Spleen (tissue), 13 donors: ENCODE measurements at regions of chr16 and their contacts with region 1.

Region 1: GRCh38 chr16:75653922-75654321 is 6.3 kb downstream of the TERF2IP start:
- DNase-seq: no peak
- H3K4me3 ChIP-seq: no peak overlapping the region
- H3K27ac ChIP-seq: no peak overlapping the region
- H3K4me1 ChIP-seq: peaks cover 34 to 67% (median 49%) of the 10 kb centered on the region in 6 donors
- H3K27me3 ChIP-seq: no peaks in the 10 kb centered on the region
- CTCF ChIP-seq: no peak
- POLR2A ChIP-seq: no peak

Region 2: GRCh38 chr16:75599452-75600277 is 54.3 kb before region 1 on chr16:
- intact Hi-C with region 1: no loop called
- DNase-seq: no peak
- H3K4me3 ChIP-seq: no peak overlapping the region
- H3K27ac ChIP-seq: no peak overlapping the region
- H3K4me1 ChIP-seq: peaks cover 0 to 5% (median 2%) of the 10 kb centered on the region in 6 donors
- H3K27me3 ChIP-seq: no peaks in the 10 kb centered on the region
- CTCF ChIP-seq: no peak
- POLR2A ChIP-seq: no peak

Region 3: DNA sequence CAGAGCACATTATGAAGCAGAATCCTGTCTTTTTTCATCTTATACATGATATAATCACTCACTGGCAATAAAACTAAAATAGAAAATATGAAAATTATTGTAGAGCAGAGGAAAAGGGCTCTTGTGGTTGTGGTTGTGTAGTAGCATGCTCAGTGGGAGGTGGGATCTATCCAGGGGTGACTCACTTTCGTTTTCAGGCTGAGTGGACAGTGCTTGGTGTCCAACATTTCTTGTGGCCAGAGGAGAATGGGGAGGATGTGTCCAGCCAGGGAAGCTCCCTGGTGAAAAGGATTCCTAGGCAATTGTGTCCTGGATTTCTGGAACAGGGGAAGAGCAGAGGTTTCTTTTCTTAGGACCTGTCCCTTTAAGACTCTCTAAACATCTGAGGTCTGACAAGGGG is 104.3 kb after region 1 on chr16:
- intact Hi-C with region 1: loop called (anchors 10 kb)
- DNase-seq: no peak
- H3K4me3 ChIP-seq: no peak overlapping the region
- H3K27ac ChIP-seq: no peak overlapping the region
- H3K4me1 ChIP-seq: peaks cover 0 to 17% (median 0%) of the 10 kb centered on the region in 6 donors
- H3K27me3 ChIP-seq: no peaks in the 10 kb centered on the region
- CTCF ChIP-seq: no peak
- POLR2A ChIP-seq: no peak

Region 4: DNA sequence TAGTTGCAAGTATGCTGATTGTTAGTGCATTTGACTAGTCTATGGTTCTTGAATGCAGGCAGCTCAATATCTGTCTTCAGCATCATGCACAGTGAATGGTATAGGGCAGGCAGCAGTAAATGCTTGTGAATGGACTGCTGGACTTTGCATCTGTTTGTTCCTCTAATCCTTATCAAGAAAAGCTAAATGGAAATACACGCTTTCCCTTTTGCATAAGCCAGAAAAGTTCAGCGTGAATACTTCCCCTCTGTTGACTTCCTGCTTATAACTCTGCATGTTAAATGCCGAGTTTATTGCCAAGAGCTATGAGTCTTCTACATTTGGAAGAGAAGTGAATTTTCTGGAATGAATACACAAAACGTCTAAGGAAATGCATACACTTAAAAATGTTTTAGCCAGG is 200.2 kb after region 1 on chr16:
- intact Hi-C with region 1: no loop called
- DNase-seq: no peak
- H3K4me3 ChIP-seq: no peak overlapping the region
- H3K27ac ChIP-seq: no peak overlapping the region
- H3K4me1 ChIP-seq: no peaks in the 10 kb centered on the region
- H3K27me3 ChIP-seq: peaks cover 0 to 6% (median 0%) of the 10 kb centered on the region in 7 donors
- CTCF ChIP-seq: no peak
- POLR2A ChIP-seq: no peak